Heart right ventricle (tissue), 16 donors: ENCODE measurements at regions of chr14 and their contacts with region 1.

Region 1: DNA sequence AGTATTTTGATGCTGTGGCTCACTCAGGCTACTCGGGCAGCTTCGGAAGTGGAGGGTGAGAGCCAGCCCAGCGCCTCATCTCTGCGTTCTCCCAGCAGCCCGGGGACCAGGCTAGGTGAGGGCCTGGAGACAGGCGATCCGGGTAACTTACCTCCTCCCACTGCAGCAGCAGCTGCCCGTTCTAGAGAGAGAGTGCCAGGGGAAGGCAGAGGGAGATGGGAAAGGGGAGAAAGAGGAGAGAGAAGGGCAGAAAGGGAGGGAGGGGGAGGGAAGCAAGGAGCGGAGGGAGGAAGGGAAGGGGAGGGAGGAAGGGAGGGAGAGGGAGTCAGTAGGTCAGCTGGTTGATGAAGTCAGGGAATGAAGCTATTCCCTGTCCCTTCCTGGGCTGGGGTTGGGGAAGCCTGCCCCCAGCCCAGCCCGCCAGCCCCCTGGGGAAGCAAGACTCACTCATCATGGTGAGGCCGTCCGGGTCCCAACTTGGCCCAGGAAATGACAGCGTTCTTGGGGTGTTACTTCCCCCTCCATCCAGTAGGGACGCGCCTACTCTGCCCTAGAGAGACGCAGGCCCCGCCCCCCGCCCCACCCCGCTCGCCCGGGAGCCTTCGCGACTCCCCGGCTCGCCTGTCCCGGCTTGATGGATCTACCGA is at the start of gene IFI27L2:
- DNase-seq: peak; percentile 72 to 86
- ATAC-seq: peak; percentile 92 to 98 (median 95)
- H3K4me3 ChIP-seq: peak within 1 kb of the TSS; percentile 41 to 63 (median 60)
- H3K27ac ChIP-seq: peak within 1 kb of the TSS in 9 of 10 donors; percentile 59 to 91 (median 78)
- H3K4me1 ChIP-seq: peaks cover 0 to 18% (median 9%) of the 10 kb centered on the region in 9 donors
- H3K27me3 ChIP-seq: no peaks in the 10 kb centered on the region
- CTCF ChIP-seq: peak in 8 of 9 donors; percentile 25 to 56 (median 40)
- total RNA-seq, gene IFI27L2: 41.5 to 92.9 (median 63.2) TPM

Region 2: GRCh38 chr14:94036313-94037050 is 92.8 kb before region 1 on chr14:
- intact Hi-C with region 1: loop called in 1 of 10 experiments (anchors 5 kb)
- DNase-seq: peak; percentile 64 to 71
- ATAC-seq: peak; percentile 79 to 89 (median 86)
- H3K4me3 ChIP-seq: no peak overlapping the region
- H3K27ac ChIP-seq: no peak overlapping the region
- H3K4me1 ChIP-seq: peaks cover 0 to 18% (median 2%) of the 10 kb centered on the region in 9 donors
- H3K27me3 ChIP-seq: no peaks in the 10 kb centered on the region
- CTCF ChIP-seq: peak; percentile 75 to 90 (median 86)

Region 3: DNA sequence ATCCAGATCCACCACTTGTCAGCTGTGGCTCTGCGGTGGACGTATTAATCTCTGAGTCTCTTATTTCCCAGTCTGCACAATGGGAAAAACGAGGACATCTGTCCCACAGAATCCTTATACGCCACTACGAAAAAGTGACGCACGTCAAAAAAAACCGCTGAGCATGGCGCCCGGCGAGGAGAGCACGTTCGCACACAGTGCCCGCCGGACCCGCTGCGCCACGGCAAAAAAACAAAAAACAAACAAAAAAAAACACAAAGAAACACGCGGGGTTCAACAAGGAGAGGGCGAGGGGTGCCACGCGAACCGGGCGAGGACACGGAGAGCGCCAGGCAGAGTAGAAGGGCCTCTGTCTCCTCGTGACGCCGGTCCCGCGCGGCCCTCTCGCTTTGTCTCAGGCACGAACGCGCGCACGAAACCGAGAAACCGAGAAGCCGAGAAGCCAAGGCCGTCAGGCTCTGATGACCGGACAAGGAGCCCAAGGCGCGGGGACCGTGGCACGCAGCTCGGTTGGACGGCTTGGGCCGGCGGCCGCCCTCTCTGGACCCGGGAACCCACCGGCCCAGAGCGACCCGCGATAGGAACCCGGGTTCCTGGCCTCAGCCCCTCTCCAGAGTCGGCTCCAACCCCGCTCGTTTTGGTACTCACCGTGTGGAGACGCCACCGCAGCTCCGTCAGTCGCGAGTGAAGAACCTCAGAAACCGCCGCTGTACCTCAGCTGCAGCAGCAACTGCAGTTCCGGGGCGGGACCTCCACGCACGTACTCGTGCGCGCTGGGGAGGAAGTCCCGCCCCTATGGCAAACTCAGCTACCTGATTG is 48.6 kb before region 1 on chr14 and contains the start of gene DDX24:
- intact Hi-C with region 1: loop called in 2 of 10 experiments (anchors 5 kb)
- DNase-seq: peak; percentile 97
- ATAC-seq: peak; percentile 99 to 100 (median 100)
- H3K4me3 ChIP-seq: peak within 1 kb of the TSS; percentile 71 to 99 (median 97)
- H3K27ac ChIP-seq: peak within 1 kb of the TSS; percentile 61 to 96 (median 92)
- H3K4me1 ChIP-seq: peaks cover 10 to 55% (median 52%) of the 10 kb centered on the region in 9 donors
- H3K27me3 ChIP-seq: no peaks in the 10 kb centered on the region
- CTCF ChIP-seq: no peak
- total RNA-seq, gene DDX24: 190 to 269 (median 240) TPM

Region 4: DNA sequence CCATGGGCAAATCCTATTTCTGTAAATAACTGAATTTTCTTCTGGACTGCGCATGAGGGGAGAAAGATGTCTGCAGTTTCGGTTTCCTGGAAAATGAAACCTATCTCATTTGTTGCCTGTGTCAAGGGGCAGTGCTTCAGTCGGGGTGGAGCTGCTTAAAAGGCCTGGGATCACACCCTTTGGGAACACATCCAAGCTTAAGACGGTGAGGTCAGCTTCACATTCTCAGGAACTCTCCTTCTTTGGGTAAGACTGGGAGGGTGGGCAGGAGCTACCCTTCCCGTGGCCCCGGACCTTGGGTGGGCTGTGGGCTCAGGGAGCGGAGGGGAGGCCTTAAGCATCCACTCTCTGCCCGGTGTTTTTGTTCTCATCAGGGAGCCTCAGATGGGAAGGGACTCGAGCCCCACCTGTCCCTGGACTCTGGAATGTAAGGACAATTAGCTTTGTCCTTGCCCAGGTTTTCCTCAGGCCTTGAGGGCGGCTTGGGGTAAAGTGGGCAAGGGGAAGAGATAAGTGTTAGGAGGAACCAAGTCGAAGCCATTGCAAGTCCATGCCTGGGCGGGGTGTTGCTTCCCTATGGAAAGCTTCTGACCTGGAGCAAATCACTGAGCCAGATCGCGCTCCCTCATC is 18.6 kb before region 1 on chr14 and contains the start of gene IFI27:
- intact Hi-C with region 1: loop called in 1 of 10 experiments (anchors 2 kb)
- DNase-seq: peak in 1 of 2 donors; percentile 88
- ATAC-seq: peak; percentile 54 to 88 (median 78)
- H3K4me3 ChIP-seq: peak within 1 kb of the TSS; percentile 40 to 73 (median 60)
- H3K27ac ChIP-seq: peak within 1 kb of the TSS; percentile 86 to 97 (median 90)
- H3K4me1 ChIP-seq: peaks cover 14 to 56% (median 41%) of the 10 kb centered on the region in 9 donors
- H3K27me3 ChIP-seq: no peaks in the 10 kb centered on the region
- CTCF ChIP-seq: no peak
- total RNA-seq, gene IFI27: 76.5 to 473 (median 148) TPM

Region 5: DNA sequence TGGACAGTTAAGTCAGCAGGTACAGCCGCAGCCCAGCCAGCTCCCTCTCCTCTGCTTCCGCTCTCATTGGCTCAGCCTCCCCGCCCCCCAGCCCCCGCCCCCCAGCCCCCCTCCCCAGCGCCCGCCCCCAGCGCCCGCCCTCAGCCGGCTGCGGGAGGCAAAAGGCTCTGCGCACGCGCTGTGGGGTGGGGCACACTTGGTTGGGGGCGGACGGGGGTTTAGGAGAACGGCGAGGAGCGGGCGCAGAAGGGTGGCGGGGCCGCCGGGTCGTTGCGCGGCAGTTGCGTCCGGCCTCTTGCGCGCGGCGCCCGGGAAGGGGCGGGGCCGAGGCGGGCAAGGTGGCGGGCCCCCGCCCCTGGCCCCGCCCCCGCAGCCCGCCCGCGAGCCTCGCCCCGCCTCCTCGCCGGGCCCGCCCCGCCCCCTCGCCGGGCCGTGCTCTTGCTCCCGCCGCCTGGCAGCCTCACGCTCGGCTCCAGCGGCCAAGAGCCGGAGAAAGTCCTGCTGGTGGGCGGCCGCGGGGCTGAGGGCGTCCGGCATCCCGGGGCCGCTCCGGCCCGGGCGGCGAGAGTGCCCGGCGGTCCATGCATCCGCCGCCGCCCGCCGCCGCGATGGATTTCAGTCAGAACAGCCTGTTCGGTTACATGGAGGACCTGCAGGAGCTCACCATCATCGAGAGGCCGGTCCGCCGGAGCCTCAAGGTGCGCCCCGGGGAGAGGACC is 44.8 kb after region 1 on chr14 and contains the start of gene PPP4R4:
- intact Hi-C with region 1: loop called in 2 of 10 experiments (anchors 2 to 5 kb)
- DNase-seq: peak; percentile 81 to 84
- ATAC-seq: peak; percentile 83 to 93 (median 91)
- H3K4me3 ChIP-seq: peak within 1 kb of the TSS; percentile 35 to 76 (median 64)
- H3K27ac ChIP-seq: peak within 1 kb of the TSS in 4 of 10 donors; percentile 2 to 73 (median 46)
- H3K4me1 ChIP-seq: peaks cover 6 to 24% (median 18%) of the 10 kb centered on the region in 9 donors
- H3K27me3 ChIP-seq: peaks cover 2 to 67% (median 35%) of the 10 kb centered on the region in 7 donors
- CTCF ChIP-seq: no peak
- total RNA-seq, gene PPP4R4: 0.13 to 0.46 (median 0.31) TPM in 5 of 10 donors, not detected in the others

Region 6: DNA sequence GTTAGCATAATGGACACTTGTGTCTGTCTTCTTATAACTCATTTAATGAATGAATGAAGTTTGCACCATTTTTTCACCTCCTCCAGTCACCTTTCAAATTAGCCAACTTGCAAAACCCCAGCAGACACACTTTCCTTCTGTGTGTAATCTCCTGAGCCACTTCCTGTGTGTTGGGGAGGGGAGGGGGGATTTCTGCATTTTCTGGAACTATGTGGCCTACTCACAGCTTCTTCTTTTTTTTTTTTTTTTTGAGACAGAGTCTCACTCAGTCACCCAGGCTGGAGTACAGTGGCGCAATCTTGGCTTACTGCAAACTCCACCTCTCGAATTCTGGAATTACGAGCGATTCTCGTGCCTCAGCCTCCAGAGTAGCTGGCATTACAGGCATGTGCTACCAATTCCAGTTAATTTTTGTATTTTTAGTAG is 263.3 kb after region 1 on chr14:
- intact Hi-C with region 1: no loop called
- DNase-seq: peak in 1 of 2 donors; percentile 22
- ATAC-seq: peak; percentile 21 to 78 (median 60)
- H3K4me3 ChIP-seq: no peak overlapping the region
- H3K27ac ChIP-seq: peak overlapping the region in 4 of 10 donors; percentile 31 to 91 (median 58)
- H3K4me1 ChIP-seq: peaks cover 0 to 67% (median 0%) of the 10 kb centered on the region in 9 donors
- H3K27me3 ChIP-seq: peaks cover 0 to 19% (median 6%) of the 10 kb centered on the region in 7 donors
- CTCF ChIP-seq: no peak

Region 7: GRCh38 chr14:94485944-94486841 is 357.0 kb after region 1 on chr14:
- intact Hi-C with region 1: loop called in 4 of 10 experiments (anchors 2 to 10 kb)
- DNase-seq: peak; percentile 11 to 48
- ATAC-seq: peak; percentile 63 to 86 (median 72)
- H3K4me3 ChIP-seq: no peak overlapping the region
- H3K27ac ChIP-seq: no peak overlapping the region
- H3K4me1 ChIP-seq: peaks cover 0 to 8% (median 7%) of the 10 kb centered on the region in 9 donors
- H3K27me3 ChIP-seq: peaks cover 0 to 73% (median 45%) of the 10 kb centered on the region in 7 donors
- CTCF ChIP-seq: peak; percentile 93 to 100 (median 99)

Region 8: DNA sequence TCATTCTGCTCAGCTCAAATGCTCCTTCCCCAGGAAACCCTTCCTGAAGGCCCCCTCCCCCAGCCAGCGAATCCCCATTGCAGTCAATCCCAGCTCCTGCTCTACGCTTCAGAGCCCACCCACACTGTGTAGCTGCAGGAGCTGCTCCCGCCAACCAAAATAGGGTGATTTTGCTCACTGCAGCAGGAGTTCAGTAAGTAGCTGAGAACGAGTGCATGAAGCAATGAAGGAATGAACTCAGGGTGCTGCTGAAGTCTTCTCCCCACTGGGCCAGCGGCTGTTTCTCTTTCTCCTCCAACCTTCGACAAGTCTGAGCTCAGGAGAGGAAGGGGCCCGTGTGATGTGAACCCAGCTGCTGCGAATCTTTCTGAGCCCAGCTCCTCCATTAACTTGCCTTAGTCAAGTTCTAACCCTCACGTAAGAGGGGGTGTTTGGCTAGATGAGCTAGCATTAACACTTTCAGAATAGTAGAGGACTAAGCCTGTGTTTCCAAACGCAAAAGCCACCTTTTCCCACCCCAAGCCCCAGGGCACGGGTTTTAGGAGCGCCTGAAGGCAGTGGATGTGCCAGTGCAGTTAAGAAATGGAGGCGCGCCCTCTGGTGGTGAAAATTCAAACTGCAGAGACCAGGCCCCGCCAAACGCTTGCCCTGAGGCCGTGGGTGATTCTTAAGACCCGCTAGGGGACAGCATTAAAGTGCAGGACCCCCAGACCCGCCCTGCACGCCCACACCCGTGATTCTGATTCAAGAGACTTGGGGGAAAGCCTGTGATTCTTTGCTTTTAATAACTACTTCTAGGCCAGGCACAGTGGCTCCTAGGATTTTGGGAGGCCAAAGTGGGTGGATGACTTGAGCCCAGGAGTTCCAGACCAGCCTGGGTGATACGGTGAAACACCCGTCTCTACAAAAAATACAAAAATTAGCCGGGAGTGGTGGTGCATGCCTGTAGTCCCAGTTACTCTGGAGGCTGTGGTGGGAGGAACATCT is 420.1 kb after region 1 on chr14:
- intact Hi-C with region 1: loop called in 1 of 10 experiments (anchors 5 kb)
- DNase-seq: peak; percentile 45 to 62
- ATAC-seq: peak; percentile 43 to 80 (median 70)
- H3K4me3 ChIP-seq: no peak overlapping the region
- H3K27ac ChIP-seq: no peak overlapping the region
- H3K4me1 ChIP-seq: peaks cover 0 to 4% (median 0%) of the 10 kb centered on the region in 9 donors
- H3K27me3 ChIP-seq: peaks cover 0 to 38% (median 24%) of the 10 kb centered on the region in 7 donors
- CTCF ChIP-seq: peak; percentile 80 to 96 (median 86)